Activated CD4-positive, alpha-beta T cell treated with anti-CD3 and anti-CD28 coated beads, Interleukin-2, amount 10 ng/mL, durations not matched to agents 24 days and 14 days (primary cell): ENCODE measurements at regions of chrX and their contacts with region 1.

Region 1: GRCh38 chrX:48574270-48575266 is at the start of gene RBM3:
- DNase-seq: peak; percentile 97
- H3K4me3 Mint-ChIP-seq: peak within 1 kb of the TSS; percentile 94
- H3K27ac Mint-ChIP-seq: peak within 1 kb of the TSS; percentile 100
- H3K4me1 Mint-ChIP-seq: peaks cover 14% of the 10 kb centered on the region
- H3K27me3 Mint-ChIP-seq: no peaks in the 10 kb centered on the region
- total RNA-seq, gene RBM3: 317 and 318 TPM in 2 replicates

Region 2: DNA sequence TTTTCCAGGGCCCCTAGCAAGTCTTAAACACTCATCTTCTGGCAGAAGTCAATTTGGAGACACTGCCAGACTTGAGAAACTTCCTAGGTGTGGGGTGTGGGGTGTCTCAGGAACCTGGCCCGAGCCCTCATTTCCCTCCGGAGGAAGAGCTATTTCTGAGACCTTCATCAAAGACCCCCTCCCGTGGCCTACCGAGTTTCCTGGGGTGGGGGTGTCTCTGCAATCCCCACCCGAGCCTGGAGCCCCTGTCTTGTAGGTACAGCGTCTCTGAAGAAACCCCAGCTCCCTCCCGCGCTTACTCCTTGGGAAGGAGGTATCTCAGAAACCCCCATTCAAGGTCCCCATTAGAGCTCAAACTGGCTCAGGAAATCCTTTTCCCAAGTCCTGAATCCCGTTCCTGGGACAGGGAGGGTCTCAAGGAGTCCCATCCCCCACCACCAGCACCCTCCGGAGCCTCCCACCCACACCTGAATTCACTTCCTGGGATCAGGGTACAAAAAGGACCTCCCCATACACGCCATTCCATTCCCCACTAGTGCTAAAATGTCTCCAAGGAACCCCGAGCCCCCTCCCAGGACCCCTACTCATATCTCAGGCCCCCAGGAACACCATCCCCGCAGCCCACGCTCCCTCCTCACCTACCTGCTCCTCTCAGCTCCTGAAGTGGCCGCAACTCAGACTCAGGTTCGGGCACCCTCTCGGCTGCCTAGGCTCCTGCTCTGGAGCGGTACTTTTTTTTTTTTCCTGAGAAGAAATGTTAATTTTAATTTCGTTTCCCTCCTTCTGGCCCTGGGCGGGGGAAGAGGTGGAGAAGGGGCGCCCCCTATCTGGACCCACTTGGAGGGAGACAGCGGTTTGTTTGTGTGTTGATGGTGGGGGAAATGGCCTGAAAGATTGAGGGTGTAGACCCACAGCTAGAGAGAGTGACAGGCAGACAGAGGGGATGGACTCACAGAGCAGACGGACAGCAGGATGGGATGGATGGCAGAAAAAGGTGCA is 105.6 kb before region 1 on chrX:
- intact Hi-C with region 1: no loop called
- DNase-seq: peak; percentile 81
- H3K4me3 Mint-ChIP-seq: peak overlapping the region; percentile 96
- H3K27ac Mint-ChIP-seq: peak overlapping the region; percentile 94
- H3K4me1 Mint-ChIP-seq: peaks cover 30% of the 10 kb centered on the region
- H3K27me3 Mint-ChIP-seq: no peaks in the 10 kb centered on the region

Region 3: DNA sequence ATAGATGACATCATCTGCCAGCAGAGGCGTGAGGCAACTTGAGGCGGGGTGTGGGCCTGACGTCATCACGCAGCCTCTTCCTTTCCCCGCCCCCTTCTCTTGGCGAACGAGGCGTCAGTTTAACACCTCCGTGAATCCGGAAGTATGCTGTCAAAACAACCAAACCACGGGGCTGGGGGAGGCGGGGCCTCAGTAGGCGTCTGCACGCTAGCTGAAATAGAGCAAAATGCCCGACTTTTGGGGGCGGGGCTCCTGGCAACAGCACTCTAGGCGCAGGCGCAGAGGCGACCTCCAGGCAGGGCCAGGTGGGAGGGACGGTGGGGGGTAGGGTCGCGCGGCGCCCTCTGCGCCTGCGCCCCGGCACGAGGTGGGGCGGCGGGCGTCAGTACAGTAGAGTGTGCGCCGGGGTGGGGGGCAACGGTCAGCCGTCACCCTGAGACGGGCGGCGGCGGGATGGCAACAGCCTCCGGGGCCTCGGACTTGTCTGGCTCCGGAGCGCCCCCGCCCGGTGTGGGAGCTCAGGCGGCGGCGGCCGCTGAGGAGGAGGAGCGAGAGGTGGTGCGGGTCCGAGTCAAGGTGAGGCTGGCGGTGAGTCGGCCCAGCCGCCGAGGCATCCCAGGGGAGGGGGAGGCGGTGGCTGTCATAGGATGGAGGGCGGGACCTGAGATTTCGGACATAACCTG is 35.1 kb before region 1 on chrX and contains the start of gene TBC1D25:
- intact Hi-C with region 1: loop called (anchors 1 kb)
- DNase-seq: peak; percentile 98
- H3K4me3 Mint-ChIP-seq: peak within 1 kb of the TSS; percentile 88
- H3K27ac Mint-ChIP-seq: peak within 1 kb of the TSS; percentile 96
- H3K4me1 Mint-ChIP-seq: peaks cover 17% of the 10 kb centered on the region
- H3K27me3 Mint-ChIP-seq: no peaks in the 10 kb centered on the region
- total RNA-seq, gene TBC1D25: 14.0 and 15.9 TPM in 2 replicates

Region 4: GRCh38 chrX:48597353-48598264 is 23.0 kb after region 1 on chrX and contains the start of gene WDR13:
- intact Hi-C with region 1: loop called (anchors 1 kb)
- DNase-seq: peak; percentile 97
- H3K4me3 Mint-ChIP-seq: peak within 1 kb of the TSS; percentile 98
- H3K27ac Mint-ChIP-seq: peak within 1 kb of the TSS; percentile 100
- H3K4me1 Mint-ChIP-seq: peaks cover 13% of the 10 kb centered on the region
- H3K27me3 Mint-ChIP-seq: peaks cover 2% of the 10 kb centered on the region
- total RNA-seq, gene WDR13: 43.8 and 44.9 TPM in 2 replicates

Region 5: GRCh38 chrX:48617542-48618340 is 43.2 kb after region 1 on chrX:
- intact Hi-C with region 1: no loop called
- DNase-seq: no peak
- H3K4me3 Mint-ChIP-seq: no peak overlapping the region
- H3K27ac Mint-ChIP-seq: no peak overlapping the region
- H3K4me1 Mint-ChIP-seq: peaks cover 2% of the 10 kb centered on the region
- H3K27me3 Mint-ChIP-seq: no peaks in the 10 kb centered on the region